Panc1 (cell line): ENCODE measurements at regions of chr17 and their contacts with region 1.

Region 1: DNA sequence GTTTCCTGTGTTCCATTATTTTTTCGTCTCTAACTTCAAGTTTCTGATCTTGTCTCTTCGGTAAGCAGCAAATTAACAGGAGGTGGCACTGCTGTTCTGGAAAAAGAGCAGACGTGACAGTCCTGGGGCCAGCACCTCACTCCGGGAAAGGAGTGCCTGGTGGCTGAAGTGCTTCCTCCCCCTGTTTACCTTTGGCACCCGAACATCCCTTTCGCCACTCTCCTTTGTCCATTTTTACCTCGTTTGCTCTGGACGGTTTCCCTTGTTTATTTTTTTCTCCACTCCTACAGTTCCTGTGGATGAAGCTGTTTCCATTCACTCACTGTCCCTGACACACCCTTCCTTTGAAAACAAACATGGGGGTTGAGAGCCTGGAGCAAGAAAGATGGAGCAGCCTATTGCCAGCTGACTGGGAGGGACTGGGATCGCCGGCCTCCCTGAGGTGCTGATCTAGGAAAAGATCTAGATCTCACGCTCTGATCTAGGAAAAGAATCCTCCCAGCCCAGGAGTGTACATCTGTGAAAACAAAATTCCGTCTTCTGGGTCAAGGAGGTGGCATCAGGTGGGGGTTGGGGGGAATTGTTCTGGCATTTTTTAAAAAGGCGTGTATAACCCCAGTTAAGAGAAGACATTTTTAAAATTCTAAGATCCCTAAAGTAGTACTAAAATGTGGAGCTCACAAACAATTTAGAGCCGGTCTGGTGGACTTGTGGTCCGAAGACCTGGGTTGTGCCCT is 12.7 kb downstream of the SAP30BP start:
- DNase-seq: no peak
- ATAC-seq: peak; percentile 75
- H3K4me3 ChIP-seq: no peak overlapping the region
- H3K27ac ChIP-seq: peak overlapping the region; percentile 66
- H3K4me1 ChIP-seq: peaks cover 40% of the 10 kb centered on the region
- H3K27me3 ChIP-seq: no peaks in the 10 kb centered on the region
- CTCF ChIP-seq: no peak; the same call in 1 of the 2 replicates

Region 2: GRCh38 chr17:75664099-75664549 is 15.8 kb before region 1 on chr17:
- CTCF ChIA-PET with region 1: no interaction called
- POLR2A ChIA-PET with region 1: interaction called, 17 read pairs
- in situ Hi-C with region 1: no loop called
- intact Hi-C with region 1: no loop called
- DNase-seq: no peak
- ATAC-seq: no peak
- H3K4me3 ChIP-seq: no peak overlapping the region
- H3K27ac ChIP-seq: no peak overlapping the region
- H3K4me1 ChIP-seq: peaks cover 22% of the 10 kb centered on the region
- H3K27me3 ChIP-seq: no peaks in the 10 kb centered on the region
- CTCF ChIP-seq: no peak

Region 3: GRCh38 chr17:75697651-75698291 is 17.9 kb after region 1 on chr17:
- CTCF ChIA-PET with region 1: interaction called, 3 read pairs
- POLR2A ChIA-PET with region 1: interaction called, 11 read pairs
- in situ Hi-C with region 1: no loop called
- intact Hi-C with region 1: no loop called
- DNase-seq: no peak
- ATAC-seq: no peak
- H3K4me3 ChIP-seq: no peak overlapping the region
- H3K27ac ChIP-seq: peak overlapping the region; percentile 87
- H3K4me1 ChIP-seq: peaks cover 82% of the 10 kb centered on the region
- H3K27me3 ChIP-seq: no peaks in the 10 kb centered on the region
- CTCF ChIP-seq: no peak

Region 4: GRCh38 chr17:75749545-75750389 is 69.9 kb after region 1 on chr17:
- CTCF ChIA-PET with region 1: interaction called, 15 read pairs
- POLR2A ChIA-PET with region 1: no interaction called
- in situ Hi-C with region 1: loop called (anchors 5 kb)
- intact Hi-C with region 1: loop called (anchors 1 kb)
- DNase-seq: peak; percentile 43
- ATAC-seq: peak; percentile 86
- H3K4me3 ChIP-seq: no peak overlapping the region
- H3K27ac ChIP-seq: no peak overlapping the region
- H3K4me1 ChIP-seq: peaks cover 1% of the 10 kb centered on the region; the same call in 1 of the 2 replicates
- H3K27me3 ChIP-seq: no peaks in the 10 kb centered on the region
- CTCF ChIP-seq: peak; percentile 98

Region 5: DNA sequence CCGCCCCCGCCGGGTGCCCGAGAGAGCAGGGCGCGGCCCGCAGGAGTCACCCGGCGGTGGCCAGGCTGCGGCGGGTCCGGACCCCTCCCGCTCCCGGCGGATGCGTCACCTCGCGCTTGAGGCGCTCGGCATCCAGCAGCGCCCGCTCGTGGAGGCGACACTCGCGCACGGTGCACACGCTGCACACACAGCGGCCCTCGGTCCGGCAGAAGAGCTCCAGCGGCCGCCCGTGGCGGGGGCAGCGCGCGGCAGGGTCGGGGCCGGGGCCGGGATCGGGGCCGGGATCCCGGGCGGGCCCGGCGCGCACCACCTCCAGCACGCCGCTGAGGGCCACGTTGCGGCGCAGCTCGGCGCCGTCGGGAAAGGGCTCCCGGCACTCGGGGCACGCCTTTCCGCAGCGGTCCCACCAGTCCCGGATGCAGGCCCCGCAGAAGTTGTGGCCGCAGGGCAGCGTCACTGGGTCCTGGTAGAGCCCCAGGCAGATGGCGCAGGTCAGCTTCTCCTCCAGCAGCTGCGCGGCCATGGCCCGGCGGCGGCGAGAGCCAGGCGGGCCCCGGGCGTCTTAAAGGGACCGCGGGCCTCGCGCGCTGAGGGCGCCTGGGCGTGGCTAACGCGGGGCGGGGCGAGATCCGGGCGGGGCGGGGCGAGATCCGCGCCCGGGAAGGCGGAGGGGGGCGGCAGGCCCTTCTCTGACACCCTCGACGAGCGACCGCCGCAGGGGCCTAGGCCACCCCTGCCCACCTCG is 216.7 kb after region 1 on chr17 and contains the start of gene TRIM65:
- CTCF ChIA-PET with region 1: no interaction called
- POLR2A ChIA-PET with region 1: no interaction called
- in situ Hi-C with region 1: no loop called
- intact Hi-C with region 1: no loop called
- DNase-seq: no peak
- ATAC-seq: peak; percentile 87
- H3K4me3 ChIP-seq: peak within 1 kb of the TSS; percentile 72
- H3K27ac ChIP-seq: peak within 1 kb of the TSS; percentile 88
- H3K4me1 ChIP-seq: peaks cover 19% of the 10 kb centered on the region
- H3K27me3 ChIP-seq: no peaks in the 10 kb centered on the region
- CTCF ChIP-seq: peak; percentile 62
- total RNA-seq, gene TRIM65: 48.6 TPM